Transverse colon (tissue), 4 donors: ENCODE measurements at regions of chr2 and their contacts with region 1.

Region 1: GRCh38 chr2:137566387-137566786 is 397.9 kb upstream of the HNMT start:
- DNase-seq: no peak
- H3K4me3 ChIP-seq: no peak overlapping the region
- H3K27ac ChIP-seq: no peak overlapping the region
- H3K4me1 ChIP-seq: no peaks in the 10 kb centered on the region
- H3K27me3 ChIP-seq: no peaks in the 10 kb centered on the region
- CTCF ChIP-seq: no peak
- EP300 ChIP-seq: no peak
- POLR2A ChIP-seq: no peak

Region 2: GRCh38 chr2:137547842-137548241 is 18.5 kb before region 1 on chr2:
- in situ Hi-C with region 1: no loop called
- intact Hi-C with region 1: no loop called
- DNase-seq: no peak
- H3K4me3 ChIP-seq: no peak overlapping the region
- H3K27ac ChIP-seq: no peak overlapping the region
- H3K4me1 ChIP-seq: no peaks in the 10 kb centered on the region
- H3K27me3 ChIP-seq: no peaks in the 10 kb centered on the region
- CTCF ChIP-seq: no peak
- EP300 ChIP-seq: no peak
- POLR2A ChIP-seq: no peak

Region 3: GRCh38 chr2:138170485-138170884 is 604.1 kb after region 1 on chr2:
- in situ Hi-C with region 1: no loop called
- intact Hi-C with region 1: loop called (anchors 5 kb)
- DNase-seq: no peak
- H3K4me3 ChIP-seq: no peak overlapping the region
- H3K27ac ChIP-seq: no peak overlapping the region
- H3K4me1 ChIP-seq: no peaks in the 10 kb centered on the region
- H3K27me3 ChIP-seq: no peaks in the 10 kb centered on the region
- CTCF ChIP-seq: no peak
- EP300 ChIP-seq: no peak
- POLR2A ChIP-seq: no peak